HCT116 (cell line): ENCODE measurements at regions of chr4 and their contacts with region 1.

Region 1: GRCh38 chr4:165327211-165328100 is at the start of gene MSMO1:
- DNase-seq: peak; percentile 98
- ATAC-seq: peak; percentile 96
- H3K4me3 ChIP-seq: peak within 1 kb of the TSS; percentile 89 to 90
- H3K27ac ChIP-seq: peak within 1 kb of the TSS; percentile 58
- H3K4me1 ChIP-seq: peaks cover 11 to 28% of the 10 kb centered on the region in 2 experiments
- H3K27me3 ChIP-seq: no peaks in the 10 kb centered on the region
- CTCF ChIP-seq: no peak
- POLR2A ChIP-seq: peak; percentile 70
- RAD21 ChIP-seq: no peak
- total RNA-seq, gene MSMO1: 54.5 TPM

Region 2: DNA sequence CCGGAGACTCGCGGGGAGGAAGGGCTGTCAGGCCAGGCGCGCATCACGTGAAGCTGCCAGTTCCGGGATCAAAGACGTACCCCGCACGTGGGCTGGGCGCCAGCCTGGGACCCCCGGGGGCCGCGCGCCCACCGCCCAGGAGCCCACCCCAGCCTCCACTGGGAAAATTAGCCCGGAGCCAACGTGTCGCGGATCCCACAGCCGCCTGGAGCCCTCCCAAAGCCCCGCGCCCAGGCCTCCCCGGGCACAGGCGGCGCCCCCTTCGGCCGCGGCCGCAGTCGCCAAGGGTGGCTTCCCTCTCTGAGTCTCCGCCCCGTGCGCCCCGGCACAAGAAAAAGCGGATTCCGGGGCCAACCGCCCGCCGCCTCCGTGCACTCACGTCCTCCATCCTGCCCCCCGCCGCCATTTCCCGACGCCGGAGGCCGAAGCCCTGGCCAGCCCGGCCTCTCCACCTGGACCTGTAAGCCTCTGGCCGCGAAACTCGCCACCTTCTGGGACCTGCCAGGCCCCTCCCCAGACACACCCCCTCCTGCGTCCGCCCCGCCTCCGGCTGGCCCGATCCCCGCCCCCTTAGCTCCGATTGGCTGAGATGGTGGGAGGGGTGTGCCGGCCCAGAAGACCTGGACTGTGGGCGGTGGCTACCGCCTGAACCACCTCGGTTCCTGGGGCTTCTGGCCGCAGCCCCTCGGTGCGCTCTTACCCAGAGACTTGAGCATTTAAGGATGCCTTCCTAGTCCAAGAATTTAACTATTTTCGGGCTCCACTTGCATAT is 214.9 kb before region 1 on chr4 and contains the start of gene TMEM192:
- CTCF ChIA-PET with region 1: interaction called, 6 read pairs
- POLR2A ChIA-PET with region 1: interaction called, 5 read pairs
- RAD21 ChIA-PET with region 1: no interaction called
- intact Hi-C with region 1: loop called (anchors 5 kb)
- DNase-seq: peak; percentile 83
- ATAC-seq: peak; percentile 93
- H3K4me3 ChIP-seq: peak within 1 kb of the TSS; percentile 65 to 78
- H3K27ac ChIP-seq: peak within 1 kb of the TSS; percentile 74
- H3K4me1 ChIP-seq: peaks cover 8 to 14% of the 10 kb centered on the region in 2 experiments; a peak in 3 of 4 replicates
- H3K27me3 ChIP-seq: no peaks in the 10 kb centered on the region
- CTCF ChIP-seq: peak in 2 of 3 experiments; percentile 39 to 53; a peak in 4 of 6 replicates
- POLR2A ChIP-seq: no peak
- RAD21 ChIP-seq: no peak
- total RNA-seq, gene TMEM192: 13.1 TPM

Region 3: GRCh38 chr4:165207431-165208220 is 119.8 kb before region 1 on chr4 and contains the start of gene KLHL2:
- CTCF ChIA-PET with region 1: no interaction called
- POLR2A ChIA-PET with region 1: interaction called, 6 read pairs
- RAD21 ChIA-PET with region 1: no interaction called
- intact Hi-C with region 1: loop called (anchors 5 kb)
- DNase-seq: no peak
- ATAC-seq: peak; percentile 88
- H3K4me3 ChIP-seq: peak within 1 kb of the TSS; percentile 85 to 89
- H3K27ac ChIP-seq: peak within 1 kb of the TSS; percentile 66; the same call in 1 of the 2 replicates
- H3K4me1 ChIP-seq: peaks cover 10 to 36% of the 10 kb centered on the region in 2 experiments
- H3K27me3 ChIP-seq: no peaks in the 10 kb centered on the region
- CTCF ChIP-seq: no peak
- POLR2A ChIP-seq: peak; percentile 66
- RAD21 ChIP-seq: no peak
- total RNA-seq, gene KLHL2: 24.6 TPM